ENCODE measurements at regions of chr5 and their contacts with region 1.

Region 1: DNA sequence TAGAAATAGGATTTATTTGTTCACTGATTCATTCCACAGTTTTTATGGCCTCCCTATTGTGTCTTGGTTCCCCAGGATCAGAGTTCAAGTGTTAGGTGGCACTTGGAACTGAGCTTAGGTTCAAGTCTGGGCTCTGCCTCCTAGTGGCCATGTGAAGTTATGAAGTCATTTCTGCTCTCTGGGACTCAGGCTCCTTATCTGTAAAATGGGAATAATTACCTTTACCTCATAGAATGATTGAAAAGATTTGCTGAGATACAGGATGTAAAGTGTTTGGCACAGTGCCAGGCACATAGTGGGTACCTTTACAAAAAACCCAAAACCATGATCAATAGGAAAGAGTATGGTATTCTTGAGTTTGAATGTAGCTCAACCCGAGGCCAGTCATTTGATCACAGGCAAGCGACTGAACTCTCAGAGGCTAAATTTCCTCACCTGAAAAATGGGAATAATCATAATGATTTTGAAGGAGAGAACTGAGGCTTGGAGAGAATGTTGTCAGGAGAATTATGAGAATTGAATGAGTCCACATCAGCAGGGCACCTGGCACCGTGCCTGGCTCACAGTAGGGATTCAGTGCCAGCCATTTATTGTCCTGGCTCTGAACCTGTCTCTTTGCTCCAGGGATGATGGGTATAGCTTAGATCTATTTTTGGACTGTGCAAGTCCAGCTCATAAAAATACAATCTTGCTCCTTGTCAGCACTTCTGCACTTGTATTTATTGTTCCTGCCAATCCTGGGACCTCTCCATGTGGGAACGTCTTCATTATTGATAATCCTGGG is 10.8 kb downstream of the NSG2 start:
- DNase-seq: no peak
- H3K4me3 ChIP-seq: no peak overlapping the region
- H3K27ac ChIP-seq: no peak overlapping the region
- H3K4me1 ChIP-seq: no peaks in the 10 kb centered on the region
- H3K27me3 ChIP-seq: peaks cover 0 to under 1% (median 0%) of the 10 kb centered on the region in 3 donors
- CTCF ChIP-seq: no peak
- EP300 ChIP-seq: no peak
- POLR2A ChIP-seq: no peak

Region 2: DNA sequence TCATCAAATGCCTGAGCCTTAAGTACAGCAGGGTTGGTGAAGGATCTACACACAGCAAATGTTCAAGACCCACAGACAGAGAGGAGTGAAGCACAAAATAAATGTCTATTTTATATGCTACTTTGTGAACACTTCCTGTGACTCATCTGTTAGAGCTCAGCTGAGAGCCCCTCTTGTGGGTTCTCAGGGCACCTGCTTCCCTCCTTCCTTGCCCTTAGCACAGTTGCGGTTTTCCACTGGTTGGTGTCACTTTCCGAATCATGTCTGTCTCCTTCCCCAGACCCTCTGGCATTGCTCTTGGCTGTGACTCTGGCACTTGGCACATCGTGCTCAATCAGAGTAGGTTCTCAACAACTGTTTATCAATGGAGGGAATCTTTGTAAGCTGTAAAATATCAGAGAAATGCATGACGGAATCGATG is 599.5 kb before region 1 on chr5:
- intact Hi-C with region 1: no loop called
- DNase-seq: no peak
- H3K4me3 ChIP-seq: no peak overlapping the region
- H3K27ac ChIP-seq: no peak overlapping the region
- H3K4me1 ChIP-seq: peaks cover 0 to 6% (median 0%) of the 10 kb centered on the region in 4 donors
- H3K27me3 ChIP-seq: no peaks in the 10 kb centered on the region
- CTCF ChIP-seq: no peak
- EP300 ChIP-seq: no peak
- POLR2A ChIP-seq: no peak

Region 3: DNA sequence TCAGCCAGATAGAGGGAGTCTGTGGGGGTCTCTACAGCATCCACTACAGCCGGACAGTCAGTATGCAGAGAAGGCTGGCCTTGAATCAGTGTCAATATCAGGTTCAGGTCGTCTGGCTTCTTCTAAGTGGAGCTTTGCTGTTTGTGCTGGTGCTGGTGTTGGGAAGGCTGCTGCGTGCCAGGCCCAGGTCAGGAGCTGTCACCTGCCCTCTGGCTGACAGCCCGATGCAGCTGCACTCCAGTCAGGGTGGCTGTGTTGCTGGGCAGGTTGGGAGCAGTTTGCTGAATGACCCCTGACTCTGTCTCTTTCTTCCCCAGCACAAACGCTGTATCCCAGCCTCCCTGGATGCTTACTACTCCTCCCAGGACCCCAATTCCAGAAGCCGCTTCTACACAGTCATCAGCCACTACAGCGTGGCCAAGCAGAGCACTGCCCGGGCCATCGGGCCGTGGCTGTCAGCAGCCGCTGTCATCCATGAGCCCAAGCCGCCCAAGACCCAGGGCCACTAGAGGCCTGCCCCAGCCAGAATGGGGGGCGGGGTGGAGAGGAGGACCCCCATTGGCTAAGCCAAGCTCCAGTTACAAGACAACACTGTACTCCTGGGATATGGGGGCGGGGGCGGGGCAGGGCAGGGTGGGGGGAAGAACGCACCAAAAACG is 50.9 kb after region 1 on chr5:
- intact Hi-C with region 1: no loop called
- DNase-seq: no peak
- H3K4me3 ChIP-seq: no peak overlapping the region
- H3K27ac ChIP-seq: no peak overlapping the region
- H3K4me1 ChIP-seq: no peaks in the 10 kb centered on the region
- H3K27me3 ChIP-seq: no peaks in the 10 kb centered on the region
- CTCF ChIP-seq: no peak
- EP300 ChIP-seq: no peak
- POLR2A ChIP-seq: no peak

Region 4: GRCh38 chr5:174311531-174312269 is 255.4 kb after region 1 on chr5:
- intact Hi-C with region 1: loop called (anchors 10 kb)
- DNase-seq: peak; percentile 72 to 90
- H3K4me3 ChIP-seq: peak overlapping the region; percentile 40 to 56 (median 44)
- H3K27ac ChIP-seq: no peak overlapping the region
- H3K4me1 ChIP-seq: peaks cover 5 to 12% (median 11%) of the 10 kb centered on the region in 4 donors
- H3K27me3 ChIP-seq: peaks cover 0 to 57% (median 18%) of the 10 kb centered on the region in 3 donors
- CTCF ChIP-seq: peak in 4 of 7 experiments; percentile 59 to 94 (median 78)
- EP300 ChIP-seq: no peak
- POLR2A ChIP-seq: no peak

Measured in stomach (tissue), 19 donors.